ENCODE measurements at regions of chr15 and their contacts with region 1.

Region 1: DNA sequence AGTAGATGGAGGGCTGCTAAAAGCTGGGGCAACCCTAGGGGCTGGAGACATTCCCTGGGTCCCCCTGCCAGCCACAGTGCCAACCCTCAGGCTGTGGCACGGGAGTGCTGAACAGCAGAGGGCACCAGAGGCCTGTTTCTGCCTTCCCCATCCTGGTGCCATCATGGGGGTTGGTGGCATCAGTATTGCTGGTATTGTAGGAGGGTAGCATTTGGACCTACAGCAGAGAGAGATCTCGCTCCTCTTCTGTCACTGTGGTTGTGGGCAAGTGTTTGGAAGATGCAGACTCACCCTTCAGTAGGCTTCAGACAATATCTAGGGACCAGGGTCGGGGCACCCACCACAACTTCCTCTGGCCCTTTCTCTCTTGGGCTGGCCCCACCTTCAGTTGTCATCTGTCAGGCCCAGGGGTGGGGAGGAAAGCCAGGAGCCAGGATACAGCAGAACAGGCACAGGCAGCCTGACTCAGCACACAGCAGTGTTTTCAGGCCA is 123.5 kb downstream of the RPLP1 start:
- DNase-seq: peak; percentile 58
- H3K4me3 ChIP-seq: no peak overlapping the region
- H3K27ac ChIP-seq: no peak overlapping the region
- H3K4me1 ChIP-seq: no peaks in the 10 kb centered on the region
- H3K27me3 ChIP-seq: no peaks in the 10 kb centered on the region
- CTCF ChIP-seq: peak; percentile 83

Region 2: GRCh38 chr15:69380100-69380727 is 195.9 kb before region 1 on chr15:
- CTCF ChIA-PET with region 1: no interaction called
- POLR2A ChIA-PET with region 1: no interaction called
- intact Hi-C with region 1: no loop called
- DNase-seq: peak; percentile 23
- H3K4me3 ChIP-seq: no peak overlapping the region
- H3K27ac ChIP-seq: no peak overlapping the region
- H3K4me1 ChIP-seq: no peaks in the 10 kb centered on the region
- H3K27me3 ChIP-seq: no peaks in the 10 kb centered on the region
- CTCF ChIP-seq: peak; percentile 40; the same call in 1 of the 2 replicates

Region 3: GRCh38 chr15:69422336-69422895 is 153.7 kb before region 1 on chr15:
- CTCF ChIA-PET with region 1: no interaction called
- POLR2A ChIA-PET with region 1: no interaction called
- intact Hi-C with region 1: no loop called
- DNase-seq: no peak
- H3K4me3 ChIP-seq: no peak overlapping the region
- H3K27ac ChIP-seq: no peak overlapping the region
- H3K4me1 ChIP-seq: no peaks in the 10 kb centered on the region
- H3K27me3 ChIP-seq: no peaks in the 10 kb centered on the region
- CTCF ChIP-seq: no peak

Region 4: DNA sequence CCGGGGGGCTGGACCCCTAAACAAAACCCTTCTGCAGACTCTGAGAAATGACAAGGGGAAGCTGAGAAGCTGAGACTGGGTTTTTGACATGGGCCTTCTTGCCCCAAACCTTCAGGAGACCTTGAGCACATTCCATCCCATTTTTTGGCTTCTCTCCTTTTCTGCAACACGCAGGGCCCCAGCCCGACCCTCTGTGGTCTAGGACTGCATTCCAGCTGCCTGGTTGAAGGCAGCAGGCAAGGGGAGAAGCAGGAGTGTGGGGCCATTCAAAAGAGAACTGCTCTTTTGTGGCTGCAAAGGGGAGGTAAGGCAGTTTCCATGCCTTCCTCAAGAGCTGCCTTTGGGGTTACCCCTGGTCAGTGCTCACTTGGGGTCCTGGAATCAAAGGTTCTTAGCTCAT is 258.7 kb after region 1 on chr15:
- CTCF ChIA-PET with region 1: no interaction called
- POLR2A ChIA-PET with region 1: no interaction called
- intact Hi-C with region 1: no loop called
- DNase-seq: no peak
- H3K4me3 ChIP-seq: no peak overlapping the region
- H3K27ac ChIP-seq: no peak overlapping the region
- H3K4me1 ChIP-seq: peaks cover 9% of the 10 kb centered on the region
- H3K27me3 ChIP-seq: no peaks in the 10 kb centered on the region
- CTCF ChIP-seq: no peak

Region 5: GRCh38 chr15:69914960-69915359 is 338.9 kb after region 1 on chr15:
- CTCF ChIA-PET with region 1: no interaction called
- POLR2A ChIA-PET with region 1: no interaction called
- intact Hi-C with region 1: no loop called
- DNase-seq: no peak
- H3K4me3 ChIP-seq: no peak overlapping the region
- H3K27ac ChIP-seq: no peak overlapping the region
- H3K4me1 ChIP-seq: no peaks in the 10 kb centered on the region
- H3K27me3 ChIP-seq: no peaks in the 10 kb centered on the region
- CTCF ChIP-seq: no peak

Region 6: GRCh38 chr15:70488002-70488605 is 912.0 kb after region 1 on chr15:
- CTCF ChIA-PET with region 1: no interaction called
- POLR2A ChIA-PET with region 1: no interaction called
- intact Hi-C with region 1: loop called (anchors 10 kb)
- DNase-seq: peak; percentile 78
- H3K4me3 ChIP-seq: no peak overlapping the region
- H3K27ac ChIP-seq: no peak overlapping the region
- H3K4me1 ChIP-seq: no peaks in the 10 kb centered on the region
- H3K27me3 ChIP-seq: no peaks in the 10 kb centered on the region
- CTCF ChIP-seq: peak; percentile 93

Measured in A673 (cell line).